Mammary epithelial cell (primary cell): ENCODE measurements at regions of chr3 and their contacts with region 1.

Region 1: DNA sequence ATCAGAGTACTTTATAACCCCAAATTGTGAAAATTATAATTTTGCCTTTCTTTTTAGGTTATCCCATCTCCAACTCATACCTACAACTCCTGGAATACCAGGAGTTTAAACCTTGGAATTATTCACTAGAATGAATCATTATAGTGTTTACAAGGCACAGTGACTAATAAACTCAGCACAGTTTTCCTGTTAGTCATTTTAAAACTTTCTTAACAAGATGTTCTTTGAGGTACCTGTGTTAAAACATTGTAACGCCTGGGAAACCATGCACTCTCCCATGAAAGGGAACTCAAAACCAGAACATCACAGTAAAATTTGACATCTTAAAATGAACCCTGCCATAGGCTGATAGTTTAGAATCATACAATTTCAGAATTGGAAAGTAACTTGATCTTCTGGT is 132.4 kb upstream of the OSTN start:
- DNase-seq: peak; percentile 77
- H3K4me3 ChIP-seq: no peak overlapping the region
- H3K27ac ChIP-seq: peak overlapping the region; percentile 95
- H3K4me1 ChIP-seq: peaks cover 54% of the 10 kb centered on the region
- H3K27me3 ChIP-seq: no peaks in the 10 kb centered on the region
- CTCF ChIP-seq: no peak

Region 2: GRCh38 chr3:190767851-190768250 is 298.8 kb before region 1 on chr3:
- CTCF ChIA-PET with region 1: no interaction called
- dilution Hi-C with region 1: no loop called
- in situ Hi-C with region 1: no loop called
- intact Hi-C with region 1: no loop called
- DNase-seq: no peak
- H3K4me3 ChIP-seq: no peak overlapping the region
- H3K27ac ChIP-seq: no peak overlapping the region
- H3K4me1 ChIP-seq: no peaks in the 10 kb centered on the region
- H3K27me3 ChIP-seq: no peaks in the 10 kb centered on the region
- CTCF ChIP-seq: no peak

Region 3: GRCh38 chr3:191020730-191021396 is 45.8 kb before region 1 on chr3:
- CTCF ChIA-PET with region 1: no interaction called
- dilution Hi-C with region 1: no loop called
- in situ Hi-C with region 1: no loop called
- intact Hi-C with region 1: no loop called
- DNase-seq: no peak
- H3K4me3 ChIP-seq: no peak overlapping the region
- H3K27ac ChIP-seq: no peak overlapping the region
- H3K4me1 ChIP-seq: no peaks in the 10 kb centered on the region
- H3K27me3 ChIP-seq: no peaks in the 10 kb centered on the region
- CTCF ChIP-seq: no peak

Region 4: DNA sequence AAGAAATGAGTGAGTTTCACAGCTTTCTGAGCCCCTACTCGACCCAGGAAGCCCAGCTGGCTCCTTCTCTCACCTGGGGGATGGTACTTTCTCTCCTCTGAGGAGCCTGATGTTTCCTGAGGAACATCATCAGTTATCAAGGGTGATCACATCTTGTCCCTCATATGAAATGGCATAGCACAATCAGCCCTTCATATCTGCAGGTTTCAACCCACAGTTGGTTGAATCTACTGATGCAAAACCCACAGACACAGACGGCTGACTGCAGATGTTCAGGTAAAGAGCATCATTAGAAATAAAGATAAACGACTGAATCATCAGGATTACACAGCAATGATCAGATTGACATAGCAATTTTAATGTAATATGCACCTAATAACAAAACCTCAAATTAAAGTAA is 38.7 kb after region 1 on chr3:
- CTCF ChIA-PET with region 1: no interaction called
- dilution Hi-C with region 1: no loop called
- in situ Hi-C with region 1: no loop called
- intact Hi-C with region 1: no loop called
- DNase-seq: no peak
- H3K4me3 ChIP-seq: no peak overlapping the region
- H3K27ac ChIP-seq: no peak overlapping the region
- H3K4me1 ChIP-seq: peaks cover 9% of the 10 kb centered on the region
- H3K27me3 ChIP-seq: no peaks in the 10 kb centered on the region
- CTCF ChIP-seq: no peak

Region 5: GRCh38 chr3:191220908-191221307 is 154.2 kb after region 1 on chr3:
- CTCF ChIA-PET with region 1: no interaction called
- dilution Hi-C with region 1: no loop called
- in situ Hi-C with region 1: no loop called
- intact Hi-C with region 1: loop called (anchors 10 kb)
- DNase-seq: peak; percentile 7
- H3K4me3 ChIP-seq: no peak overlapping the region
- H3K27ac ChIP-seq: no peak overlapping the region
- H3K4me1 ChIP-seq: no peaks in the 10 kb centered on the region
- H3K27me3 ChIP-seq: no peaks in the 10 kb centered on the region
- CTCF ChIP-seq: peak in 1 of 2 donors; percentile 27

Region 6: DNA sequence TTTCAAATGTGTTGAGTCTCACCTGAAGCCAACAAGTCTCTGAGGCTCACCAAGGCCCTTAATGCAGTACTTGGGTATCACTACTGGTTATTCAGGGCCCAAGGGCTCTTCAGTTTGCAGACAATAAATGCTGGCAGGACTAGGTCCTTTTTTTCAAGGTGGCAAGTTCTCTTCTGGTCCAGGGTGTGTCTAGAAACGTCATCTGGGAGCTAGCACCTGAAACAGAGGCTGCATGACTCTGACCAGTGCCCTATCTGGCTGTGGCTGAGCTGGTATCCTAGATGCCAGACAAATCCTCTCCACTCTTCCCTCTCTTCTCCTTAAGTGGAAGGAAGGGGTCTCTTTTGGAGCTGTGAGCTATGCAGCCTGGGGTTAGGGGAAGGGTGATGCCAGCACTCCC is 671.1 kb after region 1 on chr3:
- CTCF ChIA-PET with region 1: no interaction called
- dilution Hi-C with region 1: no loop called
- in situ Hi-C with region 1: no loop called
- intact Hi-C with region 1: no loop called
- DNase-seq: no peak
- H3K4me3 ChIP-seq: no peak overlapping the region
- H3K27ac ChIP-seq: no peak overlapping the region
- H3K4me1 ChIP-seq: no peaks in the 10 kb centered on the region
- H3K27me3 ChIP-seq: no peaks in the 10 kb centered on the region
- CTCF ChIP-seq: no peak